ENCODE measurements at regions of chr16 and their contacts with region 1.

Region 1: GRCh38 chr16:52741351-52741750 is 194.4 kb upstream of the TOX3 start:
- DNase-seq: no peak

Region 2: GRCh38 chr16:51524555-51525373 is 1216.6 kb before region 1 on chr16:
- intact Hi-C with region 1: loop called in 1 of 2 experiments (anchors 5 kb)
- DNase-seq: no peak

Region 3: DNA sequence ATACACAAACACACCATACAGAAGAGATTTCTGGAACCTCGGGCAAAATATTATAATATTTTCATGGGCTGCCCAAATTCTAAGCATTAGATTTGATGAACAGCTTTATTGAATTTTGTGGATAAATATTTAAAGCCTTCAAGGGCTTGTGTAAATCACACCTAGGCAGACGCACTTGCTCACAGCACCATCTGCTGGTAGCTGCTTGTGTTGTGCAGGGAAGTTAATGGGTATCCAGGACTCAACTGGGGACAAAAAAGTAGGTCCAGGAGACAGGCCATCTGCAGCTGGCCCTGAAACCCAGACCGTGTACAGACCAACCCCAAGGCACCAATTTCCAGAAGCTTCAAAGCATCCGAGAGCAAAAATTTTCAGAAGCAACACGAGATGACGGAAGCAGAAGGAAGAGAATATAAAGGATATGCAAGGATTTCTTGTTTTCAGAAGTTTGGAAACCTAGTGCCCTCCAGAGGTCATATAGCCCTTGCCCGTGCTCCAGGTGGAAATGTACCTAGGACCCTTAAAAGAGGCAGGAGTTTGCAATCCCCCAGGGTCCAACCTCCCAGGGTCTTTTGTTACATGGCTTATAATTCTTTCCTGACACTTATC is 171.3 kb after region 1 on chr16:
- intact Hi-C with region 1: no loop called
- DNase-seq: no peak

Measured in posterior vena cava (tissue), 2 donors.